PC-9 (cell line): ENCODE measurements at regions of chr9 and their contacts with region 1.

Region 1: DNA sequence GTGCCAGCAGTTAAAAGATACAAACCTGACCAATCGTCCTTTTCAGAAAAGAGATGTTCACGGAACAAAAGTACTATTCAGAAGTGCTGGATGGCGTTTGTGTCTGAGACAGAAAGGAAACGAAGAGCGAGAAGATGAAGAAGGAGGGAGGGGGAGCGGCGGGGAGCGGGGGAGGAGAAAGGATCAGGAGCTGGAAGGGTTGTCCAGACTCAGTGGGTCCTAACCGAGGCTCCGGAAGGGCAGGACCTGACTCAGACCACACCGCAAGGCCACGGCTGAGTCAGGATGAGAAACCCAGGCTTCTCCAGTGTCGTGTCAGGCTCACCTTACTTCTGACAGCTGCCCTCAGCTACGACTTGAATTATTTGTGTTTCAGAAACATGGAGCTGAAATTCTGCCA is 46.2 kb downstream of the PAX5 start:
- DNase-seq: peak in 1 of 2 experiments; percentile 22
- H3K4me3 ChIP-seq: no peak overlapping the region
- H3K27ac ChIP-seq: no peak overlapping the region
- H3K4me1 ChIP-seq: no peaks in the 10 kb centered on the region
- H3K27me3 ChIP-seq: no peaks in the 10 kb centered on the region
- CTCF ChIP-seq: no peak

Region 2: DNA sequence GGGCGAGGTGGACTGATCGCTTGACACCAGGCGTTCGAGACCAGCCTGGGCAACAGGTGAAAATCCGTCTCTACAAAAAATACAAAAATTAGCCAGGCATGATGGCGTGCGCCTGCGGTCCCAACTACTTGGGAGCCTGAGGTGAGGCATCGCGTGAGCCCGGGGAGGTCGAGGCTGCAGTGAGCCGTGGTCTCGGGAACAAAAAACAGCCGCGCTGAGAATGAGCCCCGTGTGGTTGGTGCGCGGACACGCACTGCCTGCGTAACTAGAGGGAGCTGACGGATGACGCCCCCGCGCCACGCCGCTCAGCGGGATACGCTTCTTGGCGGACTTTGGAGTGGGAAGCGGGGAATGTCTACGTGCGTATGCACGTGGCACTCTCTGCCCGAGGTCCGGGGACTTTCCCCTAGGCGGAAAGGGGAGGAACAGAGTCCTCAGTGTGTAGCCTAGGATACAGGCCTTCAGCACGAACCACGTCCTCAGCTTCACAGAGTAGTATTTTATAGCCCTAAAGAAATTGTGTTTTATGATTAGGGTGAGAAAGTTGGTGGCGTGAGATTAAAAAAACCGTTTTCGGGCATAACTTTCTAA is 1330.2 kb before region 1 on chr9 and contains the start of gene RMRP:
- CTCF ChIA-PET with region 1: no interaction called
- POLR2A ChIA-PET with region 1: no interaction called
- intact Hi-C with region 1: no loop called
- DNase-seq: peak; percentile 91
- H3K4me3 ChIP-seq: peak within 1 kb of the TSS; percentile 72
- H3K27ac ChIP-seq: peak within 1 kb of the TSS; percentile 94
- H3K4me1 ChIP-seq: peaks cover 26% of the 10 kb centered on the region
- H3K27me3 ChIP-seq: no peaks in the 10 kb centered on the region
- CTCF ChIP-seq: no peak; the same call in 1 of the 2 replicates
- total RNA-seq, gene RMRP: 13,432 and 13,506 TPM in 2 replicates

Region 3: DNA sequence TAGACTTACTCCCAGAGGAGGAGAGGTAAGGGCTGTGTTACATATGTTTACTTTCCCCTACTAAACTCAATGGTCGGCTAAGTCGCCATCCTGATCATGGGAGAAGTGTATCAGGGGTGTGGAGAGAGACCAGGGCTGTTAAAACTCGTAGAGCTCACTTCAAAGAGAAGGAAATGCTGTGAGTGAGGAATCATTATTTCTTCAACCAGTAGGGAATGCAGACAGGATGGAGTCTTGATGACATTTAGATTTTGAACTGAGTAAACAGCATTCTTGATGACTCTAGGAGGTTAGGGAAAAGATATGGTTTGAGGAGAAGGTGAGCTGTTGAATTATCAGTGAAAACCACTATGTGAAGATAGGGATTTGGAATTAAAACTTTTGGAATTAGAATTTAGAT is 933.9 kb before region 1 on chr9:
- CTCF ChIA-PET with region 1: no interaction called
- POLR2A ChIA-PET with region 1: no interaction called
- intact Hi-C with region 1: no loop called
- DNase-seq: no peak
- H3K4me3 ChIP-seq: no peak overlapping the region
- H3K27ac ChIP-seq: no peak overlapping the region
- H3K4me1 ChIP-seq: no peaks in the 10 kb centered on the region
- H3K27me3 ChIP-seq: no peaks in the 10 kb centered on the region
- CTCF ChIP-seq: no peak

Region 4: GRCh38 chr9:36798350-36799065 is 189.4 kb before region 1 on chr9:
- CTCF ChIA-PET with region 1: no interaction called
- POLR2A ChIA-PET with region 1: no interaction called
- intact Hi-C with region 1: loop called (anchors 2 kb)
- DNase-seq: peak in 1 of 2 experiments; percentile 3
- H3K4me3 ChIP-seq: no peak overlapping the region
- H3K27ac ChIP-seq: no peak overlapping the region
- H3K4me1 ChIP-seq: no peaks in the 10 kb centered on the region
- H3K27me3 ChIP-seq: peaks cover 33% of the 10 kb centered on the region; the same call in 1 of the 2 replicates
- CTCF ChIP-seq: peak; percentile 42; the same call in 1 of the 2 replicates

Region 5: DNA sequence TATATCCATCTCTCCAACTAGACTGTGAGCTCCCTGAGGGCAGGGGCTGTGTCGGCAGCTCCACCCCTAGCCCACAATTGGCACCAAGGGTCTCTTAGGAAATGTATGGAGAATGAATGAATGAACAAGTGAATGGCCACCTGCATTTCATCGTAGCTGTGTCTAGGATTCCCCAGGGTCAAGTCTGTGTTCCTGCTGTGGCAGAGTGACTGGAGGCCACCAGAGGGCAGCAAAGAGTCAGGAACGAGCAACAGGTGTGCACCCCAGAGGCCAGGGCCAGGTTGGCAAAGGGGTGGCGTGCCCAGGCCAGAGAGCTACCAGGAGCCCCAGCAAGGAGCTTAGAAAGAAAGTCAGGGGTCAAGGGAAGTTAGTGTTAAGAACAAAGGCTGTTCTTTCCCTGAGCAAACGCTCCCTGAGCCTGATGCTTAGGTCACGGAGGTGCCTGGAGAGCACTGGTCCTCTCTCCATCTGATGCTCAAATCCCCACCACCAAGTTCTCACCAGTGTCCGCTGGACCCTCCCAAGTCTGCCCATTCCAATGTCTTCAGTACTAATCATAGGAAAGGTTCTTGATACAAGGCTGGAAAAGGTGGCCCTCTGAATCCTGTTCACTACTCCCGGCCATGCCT is 114.5 kb before region 1 on chr9:
- CTCF ChIA-PET with region 1: interaction called, 11 read pairs
- POLR2A ChIA-PET with region 1: interaction called, 3 read pairs
- intact Hi-C with region 1: loop called (anchors 1 kb)
- DNase-seq: peak; percentile 40 to 56
- H3K4me3 ChIP-seq: no peak overlapping the region
- H3K27ac ChIP-seq: no peak overlapping the region
- H3K4me1 ChIP-seq: no peaks in the 10 kb centered on the region
- H3K27me3 ChIP-seq: peaks cover 20% of the 10 kb centered on the region
- CTCF ChIP-seq: peak; percentile 88